Left ventricle myocardium inferior (tissue), 1 donor: ENCODE measurements at regions of chr6 and their contacts with region 1.

Region 1: DNA sequence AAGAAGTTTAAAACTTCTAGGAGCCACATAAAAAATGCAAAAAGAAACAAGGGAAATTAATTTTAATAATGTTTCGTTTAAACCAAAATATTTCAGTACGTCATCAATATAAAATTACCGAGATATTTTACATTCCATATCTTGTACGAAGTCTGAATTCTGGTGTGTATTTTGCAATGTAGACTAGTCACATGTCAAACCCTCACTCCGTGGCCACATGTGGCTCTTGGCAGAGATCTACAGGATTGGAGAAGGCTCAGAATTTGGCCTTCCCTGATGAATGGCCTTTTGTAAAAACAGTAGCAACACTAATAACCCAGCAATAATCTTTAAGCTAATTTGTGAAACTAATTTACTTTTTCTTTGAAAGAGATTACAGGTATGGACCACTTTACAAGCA is 217.1 kb downstream of the PRL start:
- DNase-seq: no peak
- H3K4me3 ChIP-seq: no peak overlapping the region
- H3K27ac ChIP-seq: peak overlapping the region; percentile 23
- H3K4me1 ChIP-seq: peaks cover 3% of the 10 kb centered on the region
- H3K27me3 ChIP-seq: no peaks in the 10 kb centered on the region
- CTCF ChIP-seq: no peak

Region 2: GRCh38 chr6:21984561-21984960 is 95.2 kb before region 1 on chr6:
- intact Hi-C with region 1: loop called (anchors 5 kb)
- DNase-seq: no peak
- H3K4me3 ChIP-seq: no peak overlapping the region
- H3K27ac ChIP-seq: no peak overlapping the region
- H3K4me1 ChIP-seq: peaks cover 39% of the 10 kb centered on the region
- H3K27me3 ChIP-seq: no peaks in the 10 kb centered on the region
- CTCF ChIP-seq: no peak